Cardiac septum (tissue), 1 donor: ENCODE measurements at regions of chr17 and their contacts with region 1.

Region 1: DNA sequence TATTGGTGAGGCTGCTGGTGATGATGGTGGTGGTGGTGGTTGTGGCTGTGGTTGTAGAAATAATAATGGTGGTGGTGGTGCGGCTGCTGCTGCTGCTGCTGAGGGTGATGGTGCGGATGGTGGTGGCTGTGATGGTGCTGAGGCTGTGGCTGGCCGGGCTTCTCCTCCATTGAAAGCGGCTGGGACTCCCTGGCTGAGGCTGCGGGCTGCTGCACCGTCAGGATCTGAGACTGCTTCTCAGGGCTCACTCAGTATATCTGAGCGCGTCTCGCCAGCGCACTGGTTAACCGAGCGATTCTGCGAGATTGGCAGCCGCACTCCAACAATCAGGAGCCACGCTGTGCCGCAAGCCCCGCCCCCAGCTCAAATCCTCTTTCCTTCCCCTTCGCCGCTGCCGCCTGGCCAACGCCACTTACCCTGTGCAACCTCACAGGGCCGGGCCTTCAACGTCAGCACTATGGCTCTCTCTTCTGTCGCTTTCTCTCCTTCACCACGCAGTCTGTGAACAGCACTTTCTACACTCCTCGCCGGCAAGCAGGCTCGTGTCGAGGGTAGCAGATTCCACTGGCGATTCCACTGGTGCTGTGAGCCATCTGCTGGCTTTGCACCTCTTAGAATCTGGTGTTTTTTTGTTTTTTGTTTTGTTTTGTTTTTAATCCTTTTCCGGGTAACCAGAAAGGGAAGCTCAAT is at the start of gene NUFIP2:
- DNase-seq: peak; percentile 100
- total RNA-seq, gene NUFIP2: 39.2 TPM

Region 2: GRCh38 chr17:28878981-28879380 is 415.1 kb before region 1 on chr17:
- intact Hi-C with region 1: no loop called
- DNase-seq: no peak

Region 3: DNA sequence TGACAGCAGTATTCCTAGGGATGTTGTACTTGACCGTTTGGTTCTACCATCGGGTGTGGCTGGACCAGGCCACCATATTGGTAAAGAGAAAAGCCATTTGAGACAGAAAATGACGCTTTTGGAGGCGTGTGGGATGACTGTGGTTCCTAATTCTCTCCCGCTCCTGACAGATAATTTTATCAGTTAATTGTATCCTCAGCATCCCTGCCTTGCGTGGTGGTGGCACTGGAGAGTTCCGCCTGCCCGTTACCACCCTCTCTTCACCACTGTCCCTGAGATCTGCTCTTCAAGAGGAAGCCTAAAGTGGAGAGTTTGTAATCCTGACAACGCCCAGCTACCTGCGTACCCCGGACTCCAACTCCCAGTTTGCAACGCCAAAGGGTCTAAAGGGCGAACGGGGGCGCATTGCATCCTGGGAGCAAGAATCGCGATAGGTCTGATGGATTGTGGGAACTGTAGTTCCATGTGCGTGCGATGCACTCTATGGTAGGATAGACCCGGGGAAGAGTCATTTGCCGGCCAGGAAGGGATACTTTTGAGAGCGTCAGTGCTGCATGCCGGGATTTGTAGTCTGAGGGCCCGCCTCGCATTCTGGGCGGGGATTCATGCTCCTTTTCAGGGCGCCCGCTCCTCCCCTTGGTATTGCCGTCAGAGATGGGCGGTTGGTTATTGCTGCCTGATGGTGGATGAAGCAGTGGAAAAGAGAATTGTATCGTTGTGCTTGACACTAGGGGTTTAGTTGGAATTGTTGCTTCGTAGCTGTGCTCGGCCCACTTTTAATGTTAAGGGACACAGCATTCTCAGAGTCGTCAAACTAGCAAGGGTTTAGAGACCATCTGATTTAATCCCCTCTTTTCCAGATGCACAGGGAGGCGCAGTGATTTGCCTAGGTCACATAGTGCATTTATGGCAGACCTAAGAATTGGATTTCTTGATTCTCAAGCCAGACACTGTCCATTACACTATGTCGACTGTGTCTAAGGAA is 341.8 kb before region 1 on chr17:
- intact Hi-C with region 1: loop called (anchors 5 kb)
- DNase-seq: peak; percentile 97

Region 4: DNA sequence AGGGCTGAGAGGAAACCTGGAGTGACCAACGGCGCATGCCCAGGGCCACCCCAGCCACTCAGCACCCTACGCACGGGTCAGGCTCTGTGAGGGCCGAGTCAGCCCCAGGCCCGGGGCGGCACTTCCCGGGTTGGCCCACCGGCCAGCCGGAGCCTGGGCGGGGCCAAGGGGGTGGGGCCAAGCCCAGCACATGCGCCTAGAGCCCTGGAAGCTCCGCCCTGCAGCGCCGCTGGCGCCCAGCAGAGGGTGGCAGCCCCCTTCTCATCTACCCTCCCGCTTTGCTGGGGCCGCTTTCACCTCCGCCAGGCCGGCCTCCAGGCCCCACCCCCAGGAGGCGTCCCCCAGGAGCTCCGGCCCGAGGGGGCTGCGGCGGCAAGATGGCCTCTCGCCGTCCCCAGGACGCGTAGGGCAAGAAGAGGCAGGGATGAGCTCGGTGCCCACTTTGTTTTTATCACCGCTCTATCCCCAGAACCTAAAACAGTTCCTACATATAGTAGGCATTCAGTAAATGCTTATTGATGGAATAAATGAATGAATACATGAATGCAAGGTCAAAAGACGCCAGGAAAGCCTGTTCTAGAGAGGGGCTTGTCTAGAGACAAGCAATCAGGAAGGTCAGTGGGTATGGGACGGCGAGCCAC is 145.1 kb before region 1 on chr17:
- intact Hi-C with region 1: loop called (anchors 5 kb)
- DNase-seq: peak; percentile 97

Region 5: GRCh38 chr17:29180034-29180787 is 113.8 kb before region 1 on chr17 and contains the start of gene MYO18A:
- intact Hi-C with region 1: loop called (anchors 2 kb)
- DNase-seq: peak; percentile 93
- total RNA-seq, gene MYO18A: 317 TPM

Region 6: DNA sequence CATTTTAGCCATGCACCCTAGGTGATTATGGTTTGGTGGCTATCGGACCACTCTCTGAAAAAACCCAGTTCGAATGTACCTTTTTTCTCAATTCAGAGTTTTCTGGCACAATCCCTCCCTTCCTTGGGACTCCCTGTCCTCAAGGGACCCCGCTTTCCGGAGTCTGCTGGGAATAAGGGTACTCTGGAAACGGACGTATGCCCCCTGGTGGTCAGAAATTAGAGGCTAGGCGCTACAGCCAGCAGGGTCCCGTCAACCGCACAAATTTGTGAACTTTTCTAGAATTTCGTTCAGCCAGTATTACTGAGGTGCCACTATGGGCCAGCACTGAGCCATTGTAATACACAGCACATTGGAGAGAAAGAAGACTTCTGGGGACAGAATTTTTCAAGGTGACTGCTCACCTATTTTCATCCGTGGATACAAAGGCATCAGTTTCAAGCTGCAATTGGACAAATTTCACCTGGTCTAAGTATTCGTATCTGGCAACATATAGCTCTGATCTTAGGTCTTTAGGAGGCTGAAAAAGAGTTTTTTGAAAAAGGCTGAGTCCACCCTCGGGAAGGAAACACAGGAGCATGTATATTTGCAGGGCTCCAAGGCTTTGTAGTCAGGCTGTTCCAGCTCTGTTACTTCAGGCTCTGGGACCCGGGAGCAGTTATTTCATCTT is 74.5 kb before region 1 on chr17:
- intact Hi-C with region 1: loop called (anchors 10 kb)
- DNase-seq: peak; percentile 80

Region 7: GRCh38 chr17:29252101-29252866 is 41.8 kb before region 1 on chr17:
- intact Hi-C with region 1: loop called (anchors 5 kb)
- DNase-seq: no peak